GM12878 (cell line): ENCODE measurements at regions of chr2 and their contacts with region 1.

Region 1: GRCh38 chr2:112048887-112049286 is 6.2 kb upstream of the TMEM87B start:
- DNase-seq: no peak
- ATAC-seq: peak; percentile 91
- H3K4me3 ChIP-seq: no peak overlapping the region
- H3K27ac ChIP-seq: no peak overlapping the region
- H3K4me1 ChIP-seq: no peaks in the 10 kb centered on the region
- H3K27me3 ChIP-seq: no peaks in the 10 kb centered on the region
- CTCF ChIP-seq: peak; percentile 72 to 85 (median 73)
- EP300 ChIP-seq: no peak
- POLR2A ChIP-seq: no peak
- RAD21 ChIP-seq: peak; percentile 85

Region 2: DNA sequence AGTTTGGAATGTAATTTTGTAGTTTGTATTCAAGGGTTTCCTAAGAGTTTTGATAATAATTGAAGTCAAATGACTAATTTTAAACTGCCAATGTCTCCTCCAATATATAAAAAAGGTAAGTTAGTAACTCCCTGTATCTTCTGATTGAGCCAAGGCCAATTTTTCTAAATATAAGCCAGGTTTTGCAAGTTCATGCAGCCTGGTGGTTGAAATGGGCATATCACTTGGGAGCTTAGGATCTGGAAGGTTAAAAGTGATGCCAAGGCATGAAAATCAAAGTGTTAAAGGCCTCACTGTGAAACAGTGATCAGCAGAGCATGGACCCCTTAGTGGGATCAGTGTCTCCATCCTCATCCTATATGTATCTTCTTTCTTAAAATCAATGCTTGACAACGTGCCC is 90.0 kb before region 1 on chr2:
- CTCF ChIA-PET with region 1: no interaction called
- POLR2A ChIA-PET with region 1: no interaction called
- RAD21 ChIA-PET with region 1: no interaction called
- SMC1A ChIA-PET with region 1: interaction called, 3 read pairs
- in situ Hi-C with region 1: no loop called
- intact Hi-C with region 1: loop called (anchors 10 kb)
- DNase-seq: no peak
- ATAC-seq: no peak
- H3K4me3 ChIP-seq: no peak overlapping the region
- H3K27ac ChIP-seq: no peak overlapping the region
- H3K4me1 ChIP-seq: no peaks in the 10 kb centered on the region
- H3K27me3 ChIP-seq: no peaks in the 10 kb centered on the region; a peak in 1 of 4 replicates
- CTCF ChIP-seq: no peak
- EP300 ChIP-seq: no peak
- POLR2A ChIP-seq: no peak
- RAD21 ChIP-seq: no peak